ENCODE measurements at regions of chr9 and their contacts with region 1.

Region 1: DNA sequence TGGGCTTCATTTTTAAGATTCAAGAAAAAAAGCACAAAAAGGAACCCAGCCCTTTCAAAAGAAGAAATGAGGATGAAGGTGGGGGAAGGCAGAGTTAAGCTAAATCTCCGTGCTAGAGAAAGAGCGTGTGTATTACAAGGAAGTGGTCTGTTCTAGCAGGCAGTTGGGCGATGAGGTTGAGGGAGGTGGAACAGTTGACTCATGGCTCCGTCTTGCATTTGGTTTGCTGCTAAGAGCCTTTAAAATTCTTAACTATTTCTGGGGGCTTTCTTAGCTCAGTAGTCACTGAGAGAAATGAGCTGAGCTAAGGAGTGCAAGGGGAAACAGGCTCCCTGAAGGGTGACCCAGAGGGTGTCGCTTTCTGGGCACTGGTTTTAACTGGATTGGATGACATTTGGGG is 117.4 kb downstream of the GCNT1 start:
- DNase-seq: peak; percentile 80
- H3K4me3 ChIP-seq: no peak overlapping the region
- H3K27ac ChIP-seq: peak overlapping the region; percentile 71
- H3K4me1 ChIP-seq: peaks cover 65% of the 10 kb centered on the region
- CTCF ChIP-seq: no peak

Region 2: DNA sequence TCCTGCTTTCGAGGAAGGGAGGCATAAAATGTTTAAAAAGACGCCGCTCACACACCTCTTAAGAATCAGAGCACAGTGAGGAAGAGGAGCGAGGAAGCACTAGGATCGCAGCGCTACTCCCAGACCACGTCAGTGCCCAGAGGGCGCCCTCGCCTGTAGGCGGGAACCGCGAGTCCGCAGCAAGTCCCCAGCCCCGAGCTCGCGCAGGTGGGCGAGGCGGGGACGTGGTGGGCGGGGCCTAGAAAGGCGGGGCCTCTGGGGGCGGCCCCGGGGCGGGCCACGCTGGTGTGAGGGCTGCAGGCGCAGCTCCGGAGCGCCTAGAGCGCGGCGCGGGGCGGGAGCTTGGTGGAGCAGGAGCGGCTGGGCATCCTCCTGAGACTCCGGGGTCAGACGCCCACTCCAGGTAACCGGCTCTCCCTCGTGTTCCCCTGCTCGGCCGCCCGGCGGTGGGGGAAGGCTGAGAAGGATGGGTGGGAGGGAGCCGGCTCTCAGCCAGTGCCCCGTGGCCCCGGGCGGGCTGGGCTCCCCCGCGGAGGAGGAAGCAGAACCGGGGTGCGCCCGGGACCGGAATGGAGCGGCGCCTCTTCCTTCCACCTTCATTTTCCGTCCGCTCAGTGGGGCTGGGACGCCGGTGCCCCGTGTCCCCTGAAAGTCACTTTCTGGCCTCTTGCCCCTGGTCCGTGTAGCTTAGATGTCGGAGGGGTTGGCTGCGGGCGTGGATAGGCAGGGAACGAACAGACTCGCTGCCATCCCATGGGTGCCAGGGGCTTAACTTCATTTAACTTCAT is 117.2 kb before region 1 on chr9 and contains the start of gene GCNT1:
- CTCF ChIA-PET with region 1: interaction called, 7 read pairs
- POLR2A ChIA-PET with region 1: interaction called, 8 read pairs
- intact Hi-C with region 1: loop called (anchors 2 kb)
- DNase-seq: peak; percentile 95
- H3K4me3 ChIP-seq: peak within 1 kb of the TSS; percentile 85
- H3K27ac ChIP-seq: peak within 1 kb of the TSS; percentile 92
- H3K4me1 ChIP-seq: peaks cover 52% of the 10 kb centered on the region
- CTCF ChIP-seq: peak; percentile 82
- total RNA-seq, gene GCNT1: 10.8 and 18.2 TPM in 2 replicates

Region 3: GRCh38 chr9:76562511-76562911 is 13.8 kb before region 1 on chr9:
- CTCF ChIA-PET with region 1: no interaction called
- POLR2A ChIA-PET with region 1: interaction called, 20 read pairs
- intact Hi-C with region 1: no loop called
- DNase-seq: no peak
- H3K4me3 ChIP-seq: no peak overlapping the region
- H3K27ac ChIP-seq: peak overlapping the region; percentile 49
- H3K4me1 ChIP-seq: peaks cover 32% of the 10 kb centered on the region
- CTCF ChIP-seq: no peak

Region 4: DNA sequence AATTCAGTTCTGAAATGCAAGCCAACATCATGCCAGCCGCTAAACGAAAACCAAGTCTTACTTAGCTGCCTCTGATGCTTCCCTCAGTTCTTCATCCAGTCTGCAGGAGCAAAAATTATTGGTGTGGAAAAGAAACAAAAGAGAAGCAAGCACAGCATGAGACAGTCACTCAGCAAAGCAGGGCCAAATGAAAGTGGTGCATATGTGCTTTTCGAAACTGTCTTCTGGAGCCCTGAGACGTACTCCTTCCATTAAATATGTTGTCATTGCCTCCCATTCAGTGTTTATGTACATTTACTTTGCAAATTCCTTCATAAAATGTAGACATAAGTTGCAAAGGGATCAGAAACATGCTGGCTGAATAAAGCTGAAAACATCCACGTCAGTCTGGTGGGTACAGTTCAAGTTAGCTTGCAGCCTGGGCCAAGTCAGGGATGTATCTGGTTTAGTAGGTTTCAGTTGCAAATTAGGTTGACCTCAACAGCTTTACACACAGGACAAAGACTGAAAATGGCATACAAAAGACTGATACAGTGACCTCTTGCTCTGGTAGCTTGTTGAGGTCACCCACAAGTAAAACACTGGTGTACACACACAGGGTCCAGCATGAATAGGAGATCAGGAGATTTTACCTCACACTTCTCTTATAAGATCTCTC is 48.2 kb after region 1 on chr9:
- CTCF ChIA-PET with region 1: interaction called, 3 read pairs
- POLR2A ChIA-PET with region 1: interaction called, 7 read pairs
- intact Hi-C with region 1: loop called (anchors 5 kb)
- DNase-seq: peak; percentile 29
- H3K4me3 ChIP-seq: no peak overlapping the region
- H3K27ac ChIP-seq: no peak overlapping the region
- H3K4me1 ChIP-seq: peaks cover 51% of the 10 kb centered on the region
- CTCF ChIP-seq: no peak

Region 5: GRCh38 chr9:76658535-76659231 is 82.3 kb after region 1 on chr9:
- CTCF ChIA-PET with region 1: no interaction called
- POLR2A ChIA-PET with region 1: interaction called, 3 read pairs
- intact Hi-C with region 1: loop called (anchors 5 kb)
- DNase-seq: peak; percentile 78
- H3K4me3 ChIP-seq: no peak overlapping the region
- H3K27ac ChIP-seq: no peak overlapping the region
- H3K4me1 ChIP-seq: peaks cover 49% of the 10 kb centered on the region
- CTCF ChIP-seq: peak; percentile 95

Measured in OCI-LY7 (cell line).